H1 (cell line): ENCODE measurements at regions of chr14 and their contacts with region 1.

Region 1: DNA sequence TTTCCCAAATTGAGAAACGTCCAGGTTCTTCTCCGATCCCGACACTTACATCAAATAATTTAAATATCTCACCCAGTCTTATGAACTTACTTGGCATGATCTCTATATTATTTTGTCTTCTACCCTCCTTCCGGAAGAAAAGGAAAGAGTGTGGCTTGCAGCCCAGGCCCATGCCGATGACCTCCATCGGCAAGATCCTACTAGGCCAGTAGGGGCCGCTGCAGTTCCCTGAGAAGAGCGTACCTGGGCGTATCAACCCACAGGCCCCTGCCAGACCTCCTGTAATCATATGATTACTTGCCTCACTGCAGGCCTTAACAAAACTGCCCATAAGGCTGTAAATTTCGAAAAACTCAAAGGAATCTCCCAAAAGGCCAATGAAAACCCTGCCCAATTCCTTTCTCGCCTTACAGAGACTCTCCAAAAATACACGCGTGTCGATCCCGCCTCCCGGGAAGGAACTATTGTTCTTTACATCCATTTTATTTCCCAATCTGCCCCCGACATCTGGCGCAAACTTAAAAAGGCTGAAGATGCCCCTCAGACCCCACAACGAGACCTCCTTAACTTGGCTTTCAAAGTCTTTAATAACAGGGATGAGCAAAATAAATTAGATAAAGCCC is 69.6 kb downstream of the MOK start:
- DNase-seq: peak; percentile 53 to 92
- H3K4me3 ChIP-seq: no peak overlapping the region
- H3K27ac ChIP-seq: no peak overlapping the region
- H3K4me1 ChIP-seq: peaks cover 0 to 6% (median 2%) of the 10 kb centered on the region in 4 experiments; a peak in 4 of 7 replicates
- H3K27me3 ChIP-seq: no peaks in the 10 kb centered on the region
- CTCF ChIP-seq: peak; percentile 88 to 92 (median 91)
- EP300 ChIP-seq: no peak
- POLR2A ChIP-seq: no peak
- RAD21 ChIP-seq: peak; percentile 86 to 91

Region 2: DNA sequence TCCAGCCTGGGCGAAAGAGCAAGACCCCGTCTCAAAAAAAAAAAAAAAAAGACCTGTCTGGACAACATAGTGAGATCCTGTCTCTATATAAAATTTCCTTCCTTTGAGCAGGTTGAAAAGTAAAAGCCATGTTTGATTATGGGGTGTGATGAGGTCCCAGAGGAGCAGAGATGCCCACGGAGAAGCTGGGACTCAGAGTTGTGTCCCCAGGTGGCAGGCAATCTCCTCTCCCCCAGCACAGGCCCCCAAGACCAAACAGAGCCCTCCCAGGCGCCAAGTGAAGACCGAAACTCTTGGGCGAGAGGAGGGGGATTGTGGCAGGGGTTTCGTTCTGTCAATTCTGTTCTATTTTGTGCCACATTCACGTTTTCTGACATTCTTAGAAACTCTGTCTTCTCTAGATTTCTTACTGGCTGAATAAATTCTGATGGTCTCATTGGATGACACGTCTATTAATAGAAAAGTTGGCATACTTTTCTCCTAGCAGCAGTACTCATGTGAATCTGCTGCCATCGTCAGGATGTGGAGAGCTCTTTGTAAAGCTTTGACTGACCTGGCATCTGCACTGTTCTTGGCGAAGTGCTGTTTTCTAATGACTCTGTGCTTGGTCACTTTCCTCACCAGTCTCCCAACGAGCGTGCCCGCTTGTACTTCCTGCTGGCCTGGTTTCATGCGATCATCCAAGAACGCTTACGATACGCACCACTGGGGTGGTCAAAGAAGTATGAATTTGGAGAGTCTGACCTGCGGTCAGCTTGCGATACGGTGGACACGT is 191.9 kb before region 1 on chr14:
- CTCF ChIA-PET with region 1: no interaction called
- POLR2A ChIA-PET with region 1: no interaction called
- DNase-seq: no peak
- H3K4me3 ChIP-seq: no peak overlapping the region
- H3K27ac ChIP-seq: no peak overlapping the region
- H3K4me1 ChIP-seq: no peaks in the 10 kb centered on the region
- H3K27me3 ChIP-seq: no peaks in the 10 kb centered on the region
- CTCF ChIP-seq: no peak
- EP300 ChIP-seq: no peak
- POLR2A ChIP-seq: no peak
- RAD21 ChIP-seq: no peak

Region 3: DNA sequence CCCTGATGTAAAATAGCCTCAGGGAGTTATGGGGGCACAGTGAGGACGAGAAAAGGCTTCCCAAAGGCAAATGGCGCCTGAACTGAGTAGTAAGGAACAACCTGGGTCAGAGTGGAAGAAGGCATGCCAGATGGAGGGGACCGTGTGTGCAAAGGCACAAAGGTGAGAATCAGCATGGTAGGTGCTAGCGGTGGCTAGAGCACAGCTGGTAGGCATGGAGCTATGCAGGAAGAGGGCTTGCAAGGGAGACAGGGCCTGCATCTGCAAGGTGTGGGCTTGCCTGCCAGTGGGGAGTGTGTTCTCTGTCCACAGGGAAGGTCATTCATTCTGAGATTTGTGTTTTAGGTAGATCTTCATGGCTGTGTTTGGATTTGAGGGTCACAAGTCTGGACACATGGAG is 130.0 kb before region 1 on chr14:
- CTCF ChIA-PET with region 1: no interaction called
- POLR2A ChIA-PET with region 1: no interaction called
- DNase-seq: no peak
- H3K4me3 ChIP-seq: no peak overlapping the region
- H3K27ac ChIP-seq: no peak overlapping the region
- H3K4me1 ChIP-seq: peaks cover 0 to 2% (median 0%) of the 10 kb centered on the region in 4 experiments; a peak in 1 of 7 replicates
- H3K27me3 ChIP-seq: no peaks in the 10 kb centered on the region
- CTCF ChIP-seq: no peak
- EP300 ChIP-seq: no peak
- POLR2A ChIP-seq: no peak
- RAD21 ChIP-seq: no peak

Region 4: GRCh38 chr14:102116361-102117070 is 118.9 kb before region 1 on chr14:
- CTCF ChIA-PET with region 1: no interaction called
- POLR2A ChIA-PET with region 1: no interaction called
- DNase-seq: no peak
- H3K4me3 ChIP-seq: no peak overlapping the region
- H3K27ac ChIP-seq: no peak overlapping the region
- H3K4me1 ChIP-seq: no peaks in the 10 kb centered on the region
- H3K27me3 ChIP-seq: no peaks in the 10 kb centered on the region
- CTCF ChIP-seq: no peak
- EP300 ChIP-seq: no peak
- POLR2A ChIP-seq: no peak
- RAD21 ChIP-seq: no peak

Region 5: GRCh38 chr14:102200690-102201352 is 34.6 kb before region 1 on chr14:
- CTCF ChIA-PET with region 1: no interaction called
- POLR2A ChIA-PET with region 1: no interaction called
- DNase-seq: no peak
- H3K4me3 ChIP-seq: no peak overlapping the region
- H3K27ac ChIP-seq: no peak overlapping the region
- H3K4me1 ChIP-seq: no peaks in the 10 kb centered on the region
- H3K27me3 ChIP-seq: no peaks in the 10 kb centered on the region
- CTCF ChIP-seq: no peak
- EP300 ChIP-seq: no peak
- POLR2A ChIP-seq: no peak
- RAD21 ChIP-seq: no peak

Region 6: GRCh38 chr14:102220031-102220430 is 15.4 kb before region 1 on chr14:
- CTCF ChIA-PET with region 1: interaction called, 17 read pairs
- POLR2A ChIA-PET with region 1: no interaction called
- DNase-seq: peak in 1 of 2 experiments; percentile 42
- H3K4me3 ChIP-seq: no peak overlapping the region
- H3K27ac ChIP-seq: no peak overlapping the region
- H3K4me1 ChIP-seq: peaks cover 0 to 16% (median 6%) of the 10 kb centered on the region in 4 experiments; a peak in 6 of 7 replicates
- H3K27me3 ChIP-seq: no peaks in the 10 kb centered on the region
- CTCF ChIP-seq: no peak
- EP300 ChIP-seq: no peak
- POLR2A ChIP-seq: no peak
- RAD21 ChIP-seq: no peak